HepG2 (cell line): ENCODE measurements at regions of chr12 and their contacts with region 1.

Region 1: DNA sequence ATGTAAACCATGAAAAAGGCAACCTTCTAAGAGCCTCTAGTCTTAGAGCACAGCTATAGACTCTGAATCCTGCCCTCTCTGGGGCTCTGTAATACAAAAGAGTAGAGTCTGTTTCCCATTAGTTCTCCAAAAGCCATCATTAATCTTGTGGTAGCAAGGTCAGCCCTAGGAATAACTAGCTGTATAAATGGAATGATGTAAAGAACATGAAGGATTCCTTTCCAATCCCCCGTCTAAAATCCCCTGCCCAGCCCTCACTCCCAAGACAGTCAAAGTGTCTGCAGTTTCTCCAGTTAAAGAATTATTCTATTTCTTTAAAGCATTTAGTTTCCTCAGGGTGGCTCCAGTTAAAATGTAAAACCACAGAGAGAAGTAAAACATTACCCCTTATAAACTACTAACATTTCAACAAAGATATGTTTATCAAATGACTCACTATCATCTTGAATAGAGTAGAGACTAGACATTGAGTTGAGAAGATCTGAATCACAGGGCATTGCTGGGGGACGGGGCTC is 104.2 kb downstream of the ST8SIA1 start:
- DNase-seq: no peak
- ATAC-seq: no peak
- H3K4me3 ChIP-seq: no peak overlapping the region
- H3K27ac ChIP-seq: no peak overlapping the region
- H3K4me1 ChIP-seq: no peaks in the 10 kb centered on the region
- H3K27me3 ChIP-seq: 0 out of 5 replicates have a peak, but pooled peaks cover 0 to 2% of the 10 kb centered on the region in 2 experiments
- CTCF ChIP-seq: no peak
- EP300 ChIP-seq: no peak
- POLR2A ChIP-seq: no peak
- RAD21 ChIP-seq: no peak

Region 2: GRCh38 chr12:22275846-22276245 is 45.5 kb after region 1 on chr12:
- CTCF ChIA-PET with region 1: no interaction called
- POLR2A ChIA-PET with region 1: no interaction called
- in situ Hi-C with region 1: no loop called
- intact Hi-C with region 1: loop called (anchors 1 kb)
- DNase-seq: no peak
- ATAC-seq: no peak
- H3K4me3 ChIP-seq: no peak overlapping the region
- H3K27ac ChIP-seq: no peak overlapping the region
- H3K4me1 ChIP-seq: no peaks in the 10 kb centered on the region
- H3K27me3 ChIP-seq: no peaks in the 10 kb centered on the region
- CTCF ChIP-seq: no peak
- EP300 ChIP-seq: no peak
- POLR2A ChIP-seq: no peak
- RAD21 ChIP-seq: no peak

Region 3: DNA sequence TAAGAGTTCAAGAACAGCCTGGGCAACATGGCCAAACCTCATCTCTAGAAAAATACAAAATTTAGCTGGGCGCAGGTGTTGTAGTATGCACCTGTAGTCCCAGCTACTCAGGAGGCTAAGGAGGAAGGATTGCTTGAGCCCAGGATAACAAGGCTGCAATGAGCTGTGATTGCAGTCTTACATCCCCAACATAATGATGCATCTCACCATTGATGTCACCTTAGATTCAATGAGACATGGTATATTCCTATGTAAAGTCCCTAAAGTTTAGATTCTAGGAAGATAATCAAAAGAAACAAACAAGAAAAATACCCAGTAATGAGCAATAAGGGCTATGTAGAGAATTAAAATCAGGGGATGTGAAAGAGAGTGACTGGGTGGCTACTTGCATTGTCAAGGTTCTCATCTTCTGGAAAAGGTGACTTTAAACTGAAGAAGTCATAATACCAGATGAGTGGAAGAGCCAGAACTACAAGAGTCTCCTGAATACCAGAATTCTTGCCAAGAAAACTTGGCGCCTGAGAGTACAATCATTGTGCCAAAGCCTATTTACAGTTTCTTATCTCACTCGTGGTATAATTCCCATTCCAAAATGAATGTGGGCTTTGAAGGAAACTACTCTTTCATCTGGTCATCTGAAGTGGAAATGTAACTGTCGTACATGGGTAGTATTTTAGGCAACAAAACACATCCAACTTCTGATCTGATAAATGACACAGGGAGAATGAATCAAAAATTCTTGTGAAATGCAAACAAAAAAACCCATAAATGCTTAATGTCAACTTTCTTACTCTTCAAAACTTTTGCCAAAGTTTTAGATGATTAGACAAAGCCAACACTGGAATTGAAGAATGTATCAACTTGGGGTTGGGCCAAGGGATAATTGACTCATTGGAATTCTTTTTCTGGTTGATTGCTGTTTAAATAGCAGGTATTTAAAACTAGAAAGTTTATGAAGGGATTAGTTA is 185.3 kb after region 1 on chr12:
- CTCF ChIA-PET with region 1: no interaction called
- POLR2A ChIA-PET with region 1: no interaction called
- in situ Hi-C with region 1: no loop called
- intact Hi-C with region 1: no loop called
- DNase-seq: no peak
- ATAC-seq: no peak
- H3K4me3 ChIP-seq: no peak overlapping the region
- H3K27ac ChIP-seq: no peak overlapping the region
- H3K4me1 ChIP-seq: no peaks in the 10 kb centered on the region
- H3K27me3 ChIP-seq: no peaks in the 10 kb centered on the region
- CTCF ChIP-seq: no peak
- EP300 ChIP-seq: no peak
- POLR2A ChIP-seq: no peak
- RAD21 ChIP-seq: no peak